ENCODE measurements at regions of chr11 and their contacts with region 1.

Region 1: DNA sequence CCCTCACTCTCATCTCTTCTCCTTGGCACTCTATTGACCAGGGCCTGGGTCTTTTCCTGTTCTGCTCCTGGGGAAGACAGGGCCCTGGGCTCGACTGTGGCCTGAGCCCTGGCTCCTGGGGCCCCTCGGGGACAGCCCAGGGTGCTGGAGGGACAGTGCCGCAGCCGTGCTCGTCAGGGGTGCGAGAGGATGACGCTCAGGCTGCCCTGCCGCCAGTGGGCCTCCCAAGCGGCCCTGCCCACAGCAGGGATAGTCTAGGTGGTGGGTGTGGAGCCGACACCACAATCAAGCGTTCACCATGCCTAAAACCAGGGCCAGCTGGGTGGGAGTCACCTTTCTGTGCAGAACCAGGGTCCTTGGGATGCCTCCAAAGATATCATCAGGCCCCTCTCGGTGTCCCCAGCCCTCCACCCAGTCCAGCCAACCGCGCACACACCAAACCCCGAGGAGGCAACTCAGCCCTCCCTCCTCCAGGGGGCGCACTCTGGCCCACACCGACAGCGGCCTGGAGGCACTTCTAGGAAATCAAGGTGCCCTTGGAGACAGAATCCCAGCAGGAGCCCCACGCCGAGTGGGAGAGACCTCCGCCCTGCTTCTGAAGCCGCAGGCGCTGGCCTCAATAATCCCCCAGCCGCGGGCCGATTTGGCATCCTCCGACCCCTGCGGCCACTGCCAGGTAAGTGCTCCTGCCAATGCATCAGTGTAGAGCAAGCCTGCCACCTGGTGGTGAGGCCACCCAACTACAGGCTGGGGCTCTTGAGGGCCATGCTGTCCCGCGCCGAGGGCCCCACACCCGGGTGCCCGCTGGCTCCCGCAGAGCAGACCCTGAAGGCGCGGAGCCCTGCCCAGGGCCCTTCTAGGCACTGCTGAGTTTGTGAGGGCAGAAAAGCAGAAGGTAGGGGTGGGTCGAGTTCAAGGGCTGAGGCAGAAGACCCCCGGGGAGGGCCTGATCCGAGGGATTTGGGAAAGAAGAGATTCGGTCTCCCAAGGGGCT is 496.4 kb downstream of the BUD13 start:
- DNase-seq: peak; percentile 32 to 96 (median 74)

Region 2: DNA sequence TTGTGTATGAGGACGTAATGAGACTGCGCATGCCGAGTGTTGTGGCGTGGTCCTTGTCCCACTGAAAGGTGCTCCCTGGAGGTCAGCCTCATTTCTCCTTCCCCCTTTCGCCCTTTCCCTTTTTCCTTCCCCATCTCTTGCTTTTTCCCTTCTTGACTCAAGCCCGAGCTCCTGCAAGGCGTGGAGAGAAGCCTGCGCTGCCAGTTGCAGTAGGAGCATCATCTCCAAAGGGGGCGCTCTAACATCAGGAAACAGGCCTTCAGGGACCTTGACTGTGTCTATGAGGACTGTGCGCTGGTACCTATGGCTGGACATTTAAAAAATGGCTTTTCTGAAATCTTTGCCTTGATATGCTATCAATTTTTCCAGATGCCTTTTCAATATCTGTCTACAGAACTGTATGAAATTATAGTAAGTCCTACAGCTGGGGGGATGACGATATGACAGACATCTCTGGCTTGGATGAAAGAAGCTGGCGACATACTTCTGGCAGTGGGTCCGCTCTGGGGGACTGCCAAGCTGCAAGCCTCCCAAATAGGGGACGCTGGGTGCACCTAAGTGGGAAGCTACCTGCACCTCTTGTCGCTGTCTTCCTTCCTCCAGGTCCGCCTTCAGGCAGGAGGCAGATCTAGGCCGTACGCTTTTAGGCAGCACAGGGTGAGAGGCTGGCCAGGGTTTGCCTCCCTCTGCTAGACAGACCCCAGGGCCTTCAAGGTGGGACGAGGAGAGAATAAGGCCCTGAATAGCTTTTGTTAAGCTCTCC is 1501.6 kb before region 1 on chr11:
- intact Hi-C with region 1: loop called (anchors 5 kb)
- DNase-seq: peak; percentile 49 to 95 (median 74)

Region 3: GRCh38 chr11:115324581-115325432 is 951.5 kb before region 1 on chr11:
- intact Hi-C with region 1: loop called (anchors 5 kb)
- DNase-seq: peak in 2 of 10 donors; percentile 18 to 38

Region 4: DNA sequence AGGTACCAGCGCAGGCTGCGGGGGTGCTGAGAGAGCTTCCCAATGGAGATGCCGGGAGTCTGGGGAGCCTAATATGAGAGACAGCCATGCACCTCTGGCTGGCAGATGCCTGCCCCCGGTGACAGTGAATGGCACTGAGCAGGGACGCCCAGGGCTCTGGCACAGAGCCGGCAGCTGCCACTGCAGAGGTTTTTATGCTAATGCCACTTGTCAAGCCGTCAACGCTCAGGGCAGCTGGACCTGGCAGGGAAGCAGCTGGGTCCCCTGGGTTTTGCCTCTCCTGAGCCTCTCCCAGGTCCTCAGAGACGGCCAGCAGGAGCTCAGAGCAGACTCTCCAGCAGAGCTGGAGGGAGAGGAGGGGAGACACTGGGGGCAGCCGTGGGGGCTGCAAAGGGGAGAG is 77.2 kb before region 1 on chr11:
- intact Hi-C with region 1: no loop called
- DNase-seq: no peak

Region 5: DNA sequence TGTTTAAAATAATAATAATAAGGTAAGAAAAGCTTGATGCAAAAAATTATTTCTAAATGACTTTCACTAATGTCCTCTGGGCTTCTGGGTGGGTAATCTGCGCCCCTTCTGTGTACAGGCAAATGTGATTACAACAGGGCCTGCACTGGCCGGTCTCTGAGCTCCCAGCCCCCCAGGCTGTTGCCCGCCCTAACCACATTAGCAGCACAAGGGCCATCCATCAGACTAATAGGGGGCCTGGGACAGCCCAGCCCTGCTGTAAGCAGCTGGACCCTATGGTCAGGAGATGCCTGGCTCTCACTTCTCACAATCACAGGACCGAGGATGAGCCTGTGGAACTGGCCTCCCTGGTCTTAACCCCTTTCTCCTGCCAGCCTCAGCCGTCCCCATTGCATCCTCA is 108.1 kb after region 1 on chr11:
- intact Hi-C with region 1: no loop called
- DNase-seq: no peak